ENCODE measurements at regions of chr22 and their contacts with region 1.

Region 1: DNA sequence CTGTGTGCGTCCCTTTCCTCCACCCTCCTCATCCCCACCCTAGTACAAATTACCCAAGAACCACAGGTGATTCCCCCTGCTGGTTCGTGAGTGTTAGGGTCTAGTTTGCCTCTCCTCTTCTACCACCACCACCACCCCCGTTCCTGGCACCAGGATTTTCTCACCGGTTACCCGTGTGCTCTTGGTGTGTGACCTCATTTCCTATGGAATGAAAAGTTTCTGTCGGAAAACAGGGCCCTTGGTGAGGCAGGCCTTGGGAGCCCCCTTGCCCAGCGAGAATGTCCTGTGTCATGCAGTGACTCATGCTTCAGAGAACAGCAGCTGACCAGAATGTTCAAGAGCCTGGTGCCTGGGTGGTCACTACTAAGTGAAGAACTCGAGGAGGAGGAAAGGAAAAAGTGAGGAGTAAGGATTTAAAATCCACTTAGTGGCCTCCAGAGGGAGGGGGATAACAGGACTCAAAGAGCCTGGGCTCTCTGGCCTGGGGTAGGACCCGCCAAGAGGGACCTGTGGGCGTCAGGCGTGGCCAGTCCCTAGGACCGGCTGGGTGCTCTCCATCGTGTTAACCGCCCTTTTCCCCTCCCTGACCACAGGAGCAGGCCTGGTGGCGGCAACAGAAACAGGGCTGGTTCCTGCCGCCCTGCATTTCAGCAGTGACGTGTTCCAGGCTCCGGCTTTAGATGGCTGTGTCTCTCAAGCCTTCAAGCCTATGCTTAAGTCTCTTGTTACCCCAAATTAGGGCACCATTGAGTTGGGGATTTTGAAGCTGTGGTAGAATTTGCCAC is 30.2 kb downstream of the C22orf31 start:
- DNase-seq: peak; percentile 79 to 94 (median 93)
- H3K4me3 ChIP-seq: peak overlapping the region in 2 of 4 donors; percentile 34 to 59
- H3K27ac ChIP-seq: peak overlapping the region; percentile 85 to 99 (median 95)
- H3K4me1 ChIP-seq: peaks cover 30 to 41% of the 10 kb centered on the region in 2 donors
- H3K27me3 ChIP-seq: no peaks in the 10 kb centered on the region
- CTCF ChIP-seq: peak in 3 of 6 experiments; percentile 5 to 22 (median 5)
- POLR2A ChIP-seq: peak in 1 of 2 donors; percentile 74

Region 2: DNA sequence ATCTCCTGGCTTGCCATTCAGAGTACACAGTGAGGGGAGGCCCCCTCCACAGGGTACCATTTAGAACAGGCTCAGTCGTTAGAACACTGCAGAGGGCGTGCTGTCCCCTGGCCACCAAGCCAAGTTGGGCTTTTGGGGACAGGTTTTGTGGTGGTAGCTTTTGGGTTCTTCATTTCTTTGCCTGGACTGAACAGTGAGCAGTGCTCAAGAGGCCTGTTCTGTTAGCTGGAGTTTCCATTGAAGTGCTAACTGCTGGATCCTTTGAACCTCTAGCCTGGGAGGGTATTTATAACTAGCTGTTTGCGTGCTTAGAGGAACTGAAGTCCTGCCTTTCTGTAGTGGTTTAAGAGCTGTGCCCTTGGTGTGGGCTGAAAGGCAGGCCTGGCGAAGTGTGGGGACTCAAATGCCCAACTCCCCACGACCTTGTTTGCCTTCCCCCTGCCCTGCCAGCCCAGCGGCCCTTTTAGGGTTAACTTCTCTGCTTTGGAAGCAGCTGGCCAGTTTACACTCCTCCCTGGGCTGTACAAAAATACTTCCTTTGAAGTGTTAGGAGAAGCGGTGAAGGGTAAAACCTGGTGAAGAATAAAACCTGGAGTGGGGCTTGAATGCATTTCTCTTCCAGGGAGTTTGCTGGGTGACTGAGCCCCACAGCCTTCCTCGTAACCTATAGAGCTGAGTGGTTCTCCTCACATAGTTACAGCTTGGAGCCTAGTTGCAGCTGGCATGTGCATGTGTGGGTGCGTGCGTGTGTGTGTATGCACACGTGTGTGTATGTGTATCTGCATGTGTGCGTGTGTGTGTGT is 113.5 kb before region 1 on chr22:
- intact Hi-C with region 1: loop called in 1 of 2 experiments (anchors 10 kb)
- DNase-seq: peak in 4 of 7 donors; percentile 28 to 60 (median 44)
- H3K4me3 ChIP-seq: no peak overlapping the region
- H3K27ac ChIP-seq: peak overlapping the region in 4 of 5 donors; percentile 3 to 79 (median 51)
- H3K4me1 ChIP-seq: peaks cover 26 to 31% of the 10 kb centered on the region in 2 donors
- H3K27me3 ChIP-seq: no peaks in the 10 kb centered on the region
- CTCF ChIP-seq: no peak
- POLR2A ChIP-seq: no peak

Region 3: GRCh38 chr22:28951969-28952521 is 79.4 kb before region 1 on chr22:
- intact Hi-C with region 1: no loop called
- DNase-seq: peak in 2 of 7 donors; percentile 29 to 37
- H3K4me3 ChIP-seq: no peak overlapping the region
- H3K27ac ChIP-seq: peak overlapping the region in 1 of 5 donors; percentile 35
- H3K4me1 ChIP-seq: peaks cover 10 to 35% of the 10 kb centered on the region in 2 donors
- H3K27me3 ChIP-seq: no peaks in the 10 kb centered on the region
- CTCF ChIP-seq: peak in 2 of 6 experiments; percentile 27 to 30
- POLR2A ChIP-seq: no peak